ENCODE measurements at regions of chr6 and their contacts with region 1.

Region 1: DNA sequence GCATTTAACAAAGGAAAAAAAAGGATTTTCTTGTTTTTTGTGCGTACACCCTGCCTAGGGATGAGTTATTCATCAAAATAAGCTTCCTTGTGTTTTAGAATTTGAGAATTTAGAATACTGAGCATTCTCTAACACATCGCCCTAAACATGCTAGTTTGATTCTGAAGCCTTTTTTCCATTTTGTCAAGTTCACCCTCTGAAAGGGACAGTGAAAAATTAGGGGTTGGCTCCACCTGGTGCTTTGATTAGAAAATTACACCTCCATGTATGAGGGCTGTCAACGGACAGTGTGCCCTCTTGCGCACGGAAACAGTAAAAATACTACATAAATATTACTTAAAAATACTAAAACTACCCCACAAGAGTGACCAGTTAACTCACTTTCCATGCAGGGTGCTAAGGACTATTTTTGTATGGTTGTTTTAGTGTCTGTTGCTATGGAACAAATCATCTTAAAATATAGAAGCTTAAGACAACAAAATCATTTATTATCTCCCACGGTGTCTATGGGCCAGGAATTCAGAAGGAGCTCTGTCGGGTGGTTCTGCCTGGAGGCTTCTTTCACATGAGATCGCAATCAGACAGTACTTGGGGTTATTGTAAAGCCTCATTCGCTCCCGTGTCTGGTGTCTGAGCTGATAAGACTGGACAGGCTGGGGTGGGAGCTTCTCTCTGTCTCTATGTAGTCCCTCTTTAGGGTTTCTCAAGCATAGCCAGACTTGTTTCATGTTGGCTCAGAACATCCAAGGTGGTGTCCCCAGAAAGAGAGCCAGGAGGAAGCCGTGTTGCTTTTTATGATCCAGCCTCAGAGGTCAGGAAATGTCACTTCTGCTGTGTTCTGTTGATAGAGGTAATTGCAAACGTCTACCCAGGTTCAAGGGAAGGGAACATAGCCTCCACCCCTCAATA is 41.1 kb upstream of the TMEM170B start:
- H3K4me3 ChIP-seq: no peak overlapping the region
- H3K27ac ChIP-seq: no peak overlapping the region
- H3K4me1 ChIP-seq: no peaks in the 10 kb centered on the region
- CTCF ChIP-seq: peak; percentile 83

Region 2: GRCh38 chr6:11064836-11065235 is 431.6 kb before region 1 on chr6:
- CTCF ChIA-PET with region 1: interaction called, 30 read pairs
- POLR2A ChIA-PET with region 1: no interaction called
- H3K4me3 ChIP-seq: no peak overlapping the region
- H3K27ac ChIP-seq: no peak overlapping the region
- H3K4me1 ChIP-seq: 0 out of 2 replicates have a peak, but pooled peaks cover 2% of the 10 kb centered on the region
- CTCF ChIP-seq: no peak

Region 3: DNA sequence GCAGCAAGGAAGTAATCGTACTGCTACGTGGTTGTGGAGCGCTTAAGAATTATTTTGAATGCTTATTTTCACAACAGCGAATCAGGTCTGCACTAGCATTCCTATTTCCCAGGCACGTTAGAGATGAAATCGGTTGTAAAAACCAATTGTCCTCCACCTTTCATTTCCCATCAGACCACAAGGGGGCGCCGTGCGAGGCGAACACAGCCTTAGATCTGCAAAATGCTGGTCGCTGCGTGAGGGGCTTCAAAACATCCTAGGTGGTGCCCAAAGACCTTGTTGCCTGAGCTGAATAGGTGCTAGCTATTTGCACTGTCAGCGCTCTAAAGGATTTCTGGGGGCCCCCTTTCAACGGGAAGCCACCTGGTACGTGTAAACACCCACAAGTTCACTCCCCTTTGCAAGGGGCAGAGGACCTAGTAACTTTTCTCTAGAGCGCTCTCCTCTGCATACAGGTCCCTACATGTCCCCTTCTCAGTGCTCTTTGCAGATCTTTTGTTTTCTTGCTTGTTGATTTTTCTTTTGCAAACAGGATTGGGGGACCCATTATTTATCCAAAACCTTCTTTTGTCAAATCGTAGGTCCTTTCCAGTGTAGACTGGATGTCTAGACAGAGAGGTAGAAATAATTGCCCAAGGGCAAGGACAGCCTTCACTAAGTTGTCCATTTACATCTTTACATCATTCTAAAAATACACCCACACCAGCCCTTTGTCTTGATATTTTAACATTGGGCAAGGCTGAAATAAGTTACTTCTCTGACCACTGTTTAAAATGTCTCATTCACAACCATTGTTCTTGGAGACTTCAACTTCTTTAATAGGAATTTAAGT is 323.7 kb before region 1 on chr6:
- CTCF ChIA-PET with region 1: interaction called, 39 read pairs
- POLR2A ChIA-PET with region 1: interaction called, 6 read pairs
- H3K4me3 ChIP-seq: peak overlapping the region; percentile 21
- H3K27ac ChIP-seq: no peak overlapping the region
- H3K4me1 ChIP-seq: peaks cover 5% of the 10 kb centered on the region; the same call in 1 of the 2 replicates
- CTCF ChIP-seq: peak; percentile 63

Region 4: GRCh38 chr6:11232193-11232769 is 264.1 kb before region 1 on chr6 and contains the start of gene NEDD9:
- CTCF ChIA-PET with region 1: interaction called, 16 read pairs
- POLR2A ChIA-PET with region 1: no interaction called
- H3K4me3 ChIP-seq: peak within 1 kb of the TSS; percentile 54
- H3K27ac ChIP-seq: peak within 1 kb of the TSS; percentile 88
- H3K4me1 ChIP-seq: peaks cover 14% of the 10 kb centered on the region
- CTCF ChIP-seq: no peak

Region 5: GRCh38 chr6:11414176-11414963 is 82.0 kb before region 1 on chr6:
- CTCF ChIA-PET with region 1: interaction called, 20 read pairs
- POLR2A ChIA-PET with region 1: no interaction called
- H3K4me3 ChIP-seq: no peak overlapping the region
- H3K27ac ChIP-seq: no peak overlapping the region
- H3K4me1 ChIP-seq: no peaks in the 10 kb centered on the region
- CTCF ChIP-seq: no peak

Region 6: DNA sequence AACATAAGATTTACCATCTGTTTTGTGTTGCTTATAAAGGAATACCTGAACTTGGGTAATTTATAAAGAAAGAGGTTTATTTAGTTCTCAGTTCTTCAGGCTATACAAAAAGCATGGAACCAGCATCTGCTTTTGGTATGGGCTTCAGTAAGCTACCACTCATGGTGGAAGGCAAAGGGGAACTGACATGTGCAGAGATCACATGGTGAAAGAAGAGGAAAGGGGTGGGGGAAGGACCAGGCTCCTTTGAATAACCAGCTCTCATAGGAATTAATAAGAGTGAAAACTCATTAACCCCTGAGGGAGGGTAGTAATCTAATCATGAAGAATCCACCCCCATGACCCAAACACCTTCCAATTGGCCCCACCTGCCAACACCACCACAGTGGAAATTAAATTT is 48.4 kb before region 1 on chr6:
- CTCF ChIA-PET with region 1: no interaction called
- POLR2A ChIA-PET with region 1: no interaction called
- H3K4me3 ChIP-seq: no peak overlapping the region
- H3K27ac ChIP-seq: no peak overlapping the region
- H3K4me1 ChIP-seq: no peaks in the 10 kb centered on the region
- CTCF ChIP-seq: no peak

Region 7: DNA sequence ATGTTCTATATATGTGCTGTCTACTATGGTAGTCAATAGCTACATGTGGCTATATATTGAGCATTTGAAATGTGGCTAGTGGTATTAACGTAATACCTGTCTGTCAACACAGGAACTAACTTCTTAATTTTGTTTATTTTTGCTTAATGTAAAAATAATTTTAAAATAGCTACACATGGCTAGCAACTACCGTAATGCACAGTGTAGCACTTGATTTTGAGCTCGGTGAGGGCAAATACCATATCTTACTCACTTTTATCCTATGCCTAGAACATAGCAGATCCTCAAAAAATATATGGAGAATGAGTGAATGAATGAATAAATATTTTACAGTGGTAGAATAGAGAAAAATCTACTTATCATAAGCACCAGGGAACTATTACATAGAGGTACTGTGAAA is 13.1 kb after region 1 on chr6:
- CTCF ChIA-PET with region 1: interaction called, 27 read pairs
- POLR2A ChIA-PET with region 1: no interaction called
- H3K4me3 ChIP-seq: no peak overlapping the region
- H3K27ac ChIP-seq: no peak overlapping the region
- H3K4me1 ChIP-seq: no peaks in the 10 kb centered on the region
- CTCF ChIP-seq: no peak